Panc1 (cell line): ENCODE measurements at regions of chr9 and their contacts with region 1.

Region 1: DNA sequence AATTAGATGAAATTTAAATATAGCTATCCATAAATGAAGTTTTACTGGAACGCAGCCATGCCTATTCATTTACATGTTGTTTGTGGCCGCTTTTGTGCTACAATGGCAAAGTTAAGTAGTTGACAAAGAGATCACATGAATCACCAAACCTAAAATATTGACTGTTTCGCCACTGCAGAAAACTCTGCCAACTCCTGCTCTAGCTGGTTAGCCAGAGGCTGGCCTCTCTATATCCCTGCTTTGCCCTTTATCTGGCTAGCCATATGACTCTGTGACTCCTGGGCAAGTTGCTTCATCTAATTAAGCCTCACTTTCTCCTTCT is 91.9 kb downstream of the KLF4 start:
- DNase-seq: no peak
- ATAC-seq: no peak
- H3K4me3 ChIP-seq: no peak overlapping the region
- H3K27ac ChIP-seq: no peak overlapping the region
- H3K4me1 ChIP-seq: no peaks in the 10 kb centered on the region
- H3K27me3 ChIP-seq: no peaks in the 10 kb centered on the region
- CTCF ChIP-seq: no peak

Region 2: GRCh38 chr9:108205276-108205675 is 807.6 kb after region 1 on chr9:
- CTCF ChIA-PET with region 1: no interaction called
- POLR2A ChIA-PET with region 1: interaction called, 14 read pairs
- in situ Hi-C with region 1: no loop called
- intact Hi-C with region 1: no loop called
- DNase-seq: no peak
- ATAC-seq: no peak
- H3K4me3 ChIP-seq: no peak overlapping the region
- H3K27ac ChIP-seq: no peak overlapping the region
- H3K4me1 ChIP-seq: no peaks in the 10 kb centered on the region
- H3K27me3 ChIP-seq: no peaks in the 10 kb centered on the region
- CTCF ChIP-seq: no peak